ENCODE measurements at regions of chr1 and their contacts with region 1.

Region 1: DNA sequence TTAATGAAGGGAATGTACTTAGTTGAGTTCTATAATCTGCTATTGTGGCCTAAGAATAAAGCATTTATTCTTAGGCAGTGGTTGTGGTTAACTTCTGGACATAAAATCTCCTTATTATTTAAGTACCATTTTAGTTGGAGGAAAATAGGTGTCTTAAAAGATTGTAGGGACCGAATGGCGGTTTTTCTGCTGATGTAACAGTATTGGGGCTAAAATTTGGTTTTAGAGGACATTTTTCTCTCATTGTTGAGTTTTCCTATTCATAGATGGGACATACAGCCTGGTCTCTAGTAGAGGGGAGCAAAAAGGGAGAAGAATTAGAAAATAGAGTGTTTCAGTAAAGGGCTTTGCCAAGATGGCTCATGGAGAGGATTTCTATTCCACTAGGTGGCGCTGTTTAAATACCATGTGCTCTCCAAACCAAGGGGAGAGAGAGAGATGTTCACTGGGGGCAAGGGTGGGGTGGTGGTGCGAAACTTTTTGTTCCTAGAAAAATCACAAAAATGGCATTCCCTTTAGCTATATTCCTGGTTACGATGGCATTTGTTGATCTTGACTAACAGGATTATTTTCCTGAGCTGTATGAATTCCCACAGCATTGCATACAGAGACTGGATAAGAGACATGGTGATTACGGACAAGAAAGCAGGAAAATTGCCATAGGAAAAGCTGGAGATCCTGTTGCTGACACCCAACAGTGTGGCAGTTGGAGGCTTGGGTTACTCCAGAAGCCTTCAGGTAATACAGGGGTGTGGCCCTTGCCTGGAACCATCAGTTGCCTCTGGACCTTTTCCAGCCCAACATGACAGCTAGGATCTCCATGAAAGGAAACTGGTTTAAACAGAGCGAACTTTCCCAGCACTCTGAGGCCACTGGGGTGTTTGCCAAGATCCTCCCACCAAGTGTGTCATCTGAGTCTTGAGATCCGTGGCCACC is 18.2 kb upstream of the FCGR2A start:
- DNase-seq: peak; percentile 25
- H3K4me3 Mint-ChIP-seq: no peak overlapping the region
- H3K27ac Mint-ChIP-seq: no peak overlapping the region
- H3K4me1 Mint-ChIP-seq: peaks cover 23% of the 10 kb centered on the region
- H3K27me3 Mint-ChIP-seq: peaks cover 39% of the 10 kb centered on the region

Region 2: GRCh38 chr1:161531986-161532643 is 45.0 kb after region 1 on chr1:
- intact Hi-C with region 1: loop called (anchors 2 kb)
- DNase-seq: no peak
- H3K4me3 Mint-ChIP-seq: peak overlapping the region; percentile 4
- H3K27ac Mint-ChIP-seq: no peak overlapping the region
- H3K4me1 Mint-ChIP-seq: peaks cover 22% of the 10 kb centered on the region
- H3K27me3 Mint-ChIP-seq: peaks cover 8% of the 10 kb centered on the region

Region 3: DNA sequence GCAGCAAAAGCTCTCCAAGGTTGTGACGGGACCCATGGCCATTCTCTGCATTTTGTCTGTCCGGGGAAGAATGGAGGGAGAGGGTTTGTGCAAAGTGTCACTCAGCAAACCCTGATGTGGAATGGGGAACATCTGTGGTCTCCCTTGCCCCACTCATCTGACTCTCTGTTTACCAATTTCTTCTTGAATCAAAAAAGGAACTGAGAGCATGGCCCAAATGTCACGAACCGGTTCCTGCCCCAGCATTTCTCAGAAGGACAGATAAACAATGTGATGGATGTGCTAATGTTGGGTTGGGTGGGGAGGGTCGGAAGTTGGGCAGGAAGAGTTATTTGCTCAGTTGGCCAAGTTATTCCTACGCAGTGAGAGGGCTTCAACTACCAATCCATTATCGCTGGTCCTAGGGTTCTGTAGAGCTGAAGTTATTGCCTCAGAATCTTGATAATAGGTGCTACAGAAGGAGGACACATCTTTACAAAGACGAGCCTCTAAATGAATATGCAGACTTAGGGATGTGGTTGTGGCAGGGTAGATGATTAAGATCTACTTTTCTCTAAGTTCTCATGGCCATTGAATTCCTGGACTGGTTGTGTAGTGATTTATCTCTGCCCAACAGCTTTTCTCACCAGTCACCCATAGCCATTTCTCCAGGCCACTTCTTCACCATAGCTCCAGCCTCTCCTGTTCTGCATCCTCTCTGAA is 252.9 kb after region 1 on chr1:
- intact Hi-C with region 1: loop called (anchors 1 kb)
- DNase-seq: no peak
- H3K4me3 Mint-ChIP-seq: no peak overlapping the region
- H3K27ac Mint-ChIP-seq: no peak overlapping the region
- H3K4me1 Mint-ChIP-seq: peaks cover 53% of the 10 kb centered on the region
- H3K27me3 Mint-ChIP-seq: peaks cover 24% of the 10 kb centered on the region

Region 4: DNA sequence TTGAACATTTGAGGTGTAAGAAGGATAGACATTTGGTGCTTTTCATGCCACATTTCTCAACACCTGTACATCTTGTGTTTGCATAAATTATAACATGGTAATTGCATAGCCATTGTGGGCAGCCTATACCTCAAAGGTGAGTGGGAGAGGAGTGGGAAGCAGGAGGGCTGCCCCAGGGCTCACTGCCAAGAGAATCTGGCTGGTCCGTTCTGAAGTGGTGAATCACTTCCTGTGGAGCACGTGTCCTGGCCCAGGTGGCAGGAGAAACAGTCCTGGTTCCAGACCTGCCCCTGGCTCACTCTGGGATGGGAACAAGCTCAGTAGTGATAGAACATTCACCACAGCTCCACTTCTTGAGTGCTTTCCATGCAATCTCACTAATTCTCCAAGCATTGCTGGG is 548.2 kb after region 1 on chr1:
- intact Hi-C with region 1: loop called (anchors 10 kb)
- DNase-seq: no peak
- H3K4me3 Mint-ChIP-seq: no peak overlapping the region
- H3K27ac Mint-ChIP-seq: no peak overlapping the region
- H3K4me1 Mint-ChIP-seq: peaks cover 5% of the 10 kb centered on the region
- H3K27me3 Mint-ChIP-seq: peaks cover 18% of the 10 kb centered on the region